Activated CD4-positive, alpha-beta memory T cell treated with anti-CD3 and anti-CD28 coated beads for 36 hours (primary cell): ENCODE measurements at regions of chr13 and their contacts with region 1.

Region 1: GRCh38 chr13:59677966-59678814 is 485.5 kb downstream of the DIAPH3 start:
- DNase-seq: no peak
- H3K4me3 Mint-ChIP-seq: no peak overlapping the region
- H3K27ac Mint-ChIP-seq: no peak overlapping the region
- H3K4me1 Mint-ChIP-seq: no peaks in the 10 kb centered on the region
- H3K27me3 Mint-ChIP-seq: no peaks in the 10 kb centered on the region

Region 2: DNA sequence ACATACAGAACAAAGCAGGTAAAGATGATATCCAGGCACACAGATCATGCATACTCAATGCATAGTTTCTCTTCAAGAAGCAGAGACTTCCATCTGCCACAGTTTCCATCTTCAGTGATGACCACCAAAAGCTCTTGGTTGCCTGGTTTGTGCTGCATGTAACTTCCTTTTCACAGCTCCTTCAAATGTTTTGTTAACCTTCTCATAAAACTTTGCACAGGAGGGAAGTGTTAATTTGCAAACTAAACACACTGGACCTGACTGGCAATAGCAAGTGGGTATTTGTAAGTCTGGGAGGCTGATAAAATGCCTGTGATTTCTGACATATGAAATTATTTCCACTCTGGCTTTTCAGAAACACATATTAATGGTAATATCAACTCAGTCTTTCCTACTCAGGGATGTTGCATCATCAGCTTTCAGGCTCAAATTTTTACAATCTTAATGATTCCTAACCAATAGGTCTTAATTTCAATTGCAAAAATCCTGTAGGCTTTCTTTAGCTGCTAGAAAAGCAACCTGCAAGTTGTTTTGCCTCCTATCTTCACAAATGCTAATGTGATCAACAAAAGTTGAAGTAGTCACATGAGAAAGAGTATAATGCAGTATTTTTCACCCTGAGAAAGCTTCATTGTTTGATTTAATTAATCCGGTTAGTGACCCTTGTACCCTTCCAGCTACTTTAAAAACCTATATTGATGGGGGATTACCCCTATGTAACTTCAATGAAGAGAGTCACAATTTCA is 90.0 kb before region 1 on chr13:
- CTCF ChIA-PET with region 1: no interaction called
- POLR2A ChIA-PET with region 1: no interaction called
- intact Hi-C with region 1: no loop called
- DNase-seq: no peak
- H3K4me3 Mint-ChIP-seq: no peak overlapping the region
- H3K27ac Mint-ChIP-seq: no peak overlapping the region
- H3K4me1 Mint-ChIP-seq: no peaks in the 10 kb centered on the region
- H3K27me3 Mint-ChIP-seq: peaks cover 4% of the 10 kb centered on the region

Region 3: GRCh38 chr13:59623206-59623915 is 54.8 kb before region 1 on chr13:
- CTCF ChIA-PET with region 1: no interaction called
- POLR2A ChIA-PET with region 1: no interaction called
- intact Hi-C with region 1: no loop called
- DNase-seq: no peak
- H3K4me3 Mint-ChIP-seq: no peak overlapping the region
- H3K27ac Mint-ChIP-seq: no peak overlapping the region
- H3K4me1 Mint-ChIP-seq: no peaks in the 10 kb centered on the region
- H3K27me3 Mint-ChIP-seq: peaks cover 16% of the 10 kb centered on the region

Region 4: GRCh38 chr13:59782696-59783095 is 104.5 kb after region 1 on chr13:
- CTCF ChIA-PET with region 1: no interaction called
- POLR2A ChIA-PET with region 1: no interaction called
- intact Hi-C with region 1: no loop called
- DNase-seq: no peak
- H3K4me3 Mint-ChIP-seq: no peak overlapping the region
- H3K27ac Mint-ChIP-seq: no peak overlapping the region
- H3K4me1 Mint-ChIP-seq: no peaks in the 10 kb centered on the region
- H3K27me3 Mint-ChIP-seq: no peaks in the 10 kb centered on the region

Region 5: DNA sequence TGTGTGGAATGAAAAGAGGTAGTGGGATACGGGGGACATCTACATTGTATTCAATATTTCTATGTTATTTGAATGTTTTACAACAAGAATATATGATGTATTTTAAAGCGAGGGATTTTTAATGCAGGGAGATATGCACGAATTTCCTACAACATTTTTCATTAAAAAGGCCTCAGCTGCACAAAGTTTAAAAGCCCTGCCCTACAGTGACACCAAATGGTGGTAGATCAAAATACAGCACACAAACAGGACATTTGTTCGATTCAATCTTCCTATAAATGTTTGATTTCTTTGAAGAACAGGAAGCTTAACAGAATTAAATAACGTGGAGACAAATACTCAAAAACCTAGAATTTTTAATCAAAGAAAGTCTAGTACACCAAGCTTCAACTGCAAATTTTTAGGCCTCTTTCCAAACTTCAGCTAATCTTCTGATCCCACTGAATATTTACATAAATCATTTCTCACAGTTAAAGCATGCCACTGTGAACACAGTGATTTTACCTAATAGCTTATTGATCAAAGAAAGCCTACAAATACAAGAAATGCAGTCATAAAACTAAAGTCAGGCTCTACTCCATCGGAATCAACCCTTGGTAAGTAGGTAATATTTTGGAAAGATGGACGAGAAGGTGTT is 228.3 kb after region 1 on chr13:
- CTCF ChIA-PET with region 1: interaction called, 3 read pairs
- POLR2A ChIA-PET with region 1: no interaction called
- intact Hi-C with region 1: loop called (anchors 2 kb)
- DNase-seq: no peak
- H3K4me3 Mint-ChIP-seq: no peak overlapping the region
- H3K27ac Mint-ChIP-seq: no peak overlapping the region
- H3K4me1 Mint-ChIP-seq: no peaks in the 10 kb centered on the region
- H3K27me3 Mint-ChIP-seq: no peaks in the 10 kb centered on the region

Region 6: DNA sequence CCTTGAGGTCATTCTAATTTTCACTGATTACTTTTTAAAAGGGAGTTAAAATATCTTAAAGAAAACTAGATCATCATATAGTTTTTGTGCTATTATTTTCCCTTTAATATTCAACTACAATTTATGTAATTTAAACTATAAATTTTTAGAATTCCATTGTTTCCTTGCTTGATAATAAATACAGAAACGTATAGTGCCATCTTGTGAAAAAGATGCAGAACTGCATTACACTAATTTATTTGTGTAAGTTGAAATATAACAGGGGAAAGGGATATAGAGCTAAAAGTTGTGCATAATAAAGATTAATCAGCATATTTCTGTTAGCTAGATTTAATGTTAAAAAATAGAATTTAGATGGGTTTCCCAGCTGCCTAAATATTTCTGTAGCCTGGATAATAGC is 657.3 kb after region 1 on chr13:
- CTCF ChIA-PET with region 1: interaction called, 4 read pairs
- POLR2A ChIA-PET with region 1: no interaction called
- intact Hi-C with region 1: loop called (anchors 1 kb)
- DNase-seq: no peak
- H3K4me3 Mint-ChIP-seq: no peak overlapping the region
- H3K27ac Mint-ChIP-seq: no peak overlapping the region
- H3K4me1 Mint-ChIP-seq: no peaks in the 10 kb centered on the region
- H3K27me3 Mint-ChIP-seq: no peaks in the 10 kb centered on the region

Region 7: GRCh38 chr13:60417734-60418133 is 739.5 kb after region 1 on chr13:
- CTCF ChIA-PET with region 1: no interaction called
- POLR2A ChIA-PET with region 1: no interaction called
- intact Hi-C with region 1: no loop called
- DNase-seq: no peak
- H3K4me3 Mint-ChIP-seq: no peak overlapping the region
- H3K27ac Mint-ChIP-seq: no peak overlapping the region
- H3K4me1 Mint-ChIP-seq: peaks cover 16% of the 10 kb centered on the region
- H3K27me3 Mint-ChIP-seq: no peaks in the 10 kb centered on the region